HEK293 (cell line): ENCODE measurements at regions of chr10 and their contacts with region 1.

Region 1: DNA sequence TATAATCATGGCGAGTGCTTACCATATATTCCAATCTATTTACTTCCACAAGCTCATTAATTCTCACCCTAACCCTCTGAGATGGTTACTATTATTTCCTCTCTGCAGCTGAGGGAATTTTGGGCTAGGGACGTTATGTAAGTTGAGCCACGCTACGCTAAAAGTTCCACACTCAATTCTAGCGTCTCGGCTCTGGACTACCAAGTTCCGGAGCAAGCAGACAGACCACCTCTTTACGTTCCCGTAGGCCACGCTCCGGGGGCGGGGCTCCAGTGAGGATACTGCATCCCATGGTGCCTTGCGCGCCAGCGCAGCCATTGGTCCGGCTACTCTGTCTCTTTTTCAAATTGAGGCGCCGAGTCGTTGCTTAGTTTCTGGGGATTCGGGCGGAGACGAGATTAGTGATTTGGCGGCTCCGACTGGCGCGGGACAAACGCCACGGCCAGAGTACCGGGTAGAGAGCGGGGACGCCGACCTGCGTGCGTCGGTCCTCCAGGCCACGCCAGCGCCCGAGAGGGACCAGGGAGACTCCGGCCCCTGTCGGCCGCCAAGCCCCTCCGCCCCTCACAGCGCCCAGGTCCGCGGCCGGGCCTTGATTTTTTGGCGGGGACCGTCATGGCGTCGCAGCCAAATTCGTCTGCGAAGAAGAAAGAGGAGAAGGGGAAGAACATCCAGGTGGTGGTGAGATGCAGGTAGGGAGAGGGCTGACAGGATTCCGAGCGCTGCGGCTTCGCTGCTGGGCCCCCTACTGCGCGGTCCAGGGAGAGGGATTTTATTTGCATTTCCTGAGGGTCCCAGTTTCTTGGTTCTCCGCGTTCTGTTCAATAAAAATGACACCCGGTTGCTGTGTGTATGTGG is at the start of gene KIF11:
- H3K4me3 ChIP-seq: peak within 1 kb of the TSS; percentile 87
- H3K27ac ChIP-seq: peak within 1 kb of the TSS; percentile 86
- H3K4me1 ChIP-seq: no peaks in the 10 kb centered on the region
- CTCF ChIP-seq: no peak; the same call in 1 of the 2 replicates

Region 2: GRCh38 chr10:92573798-92574547 is 19.0 kb before region 1 on chr10 and contains the start of gene IDE:
- CTCF ChIA-PET with region 1: interaction called, 4 read pairs
- POLR2A ChIA-PET with region 1: interaction called, 21 read pairs
- H3K4me3 ChIP-seq: peak within 1 kb of the TSS; percentile 84
- H3K27ac ChIP-seq: peak within 1 kb of the TSS; percentile 95
- H3K4me1 ChIP-seq: peaks cover 13% of the 10 kb centered on the region
- CTCF ChIP-seq: peak; percentile 93